ENCODE measurements at regions of chr1 and their contacts with region 1.

Region 1: DNA sequence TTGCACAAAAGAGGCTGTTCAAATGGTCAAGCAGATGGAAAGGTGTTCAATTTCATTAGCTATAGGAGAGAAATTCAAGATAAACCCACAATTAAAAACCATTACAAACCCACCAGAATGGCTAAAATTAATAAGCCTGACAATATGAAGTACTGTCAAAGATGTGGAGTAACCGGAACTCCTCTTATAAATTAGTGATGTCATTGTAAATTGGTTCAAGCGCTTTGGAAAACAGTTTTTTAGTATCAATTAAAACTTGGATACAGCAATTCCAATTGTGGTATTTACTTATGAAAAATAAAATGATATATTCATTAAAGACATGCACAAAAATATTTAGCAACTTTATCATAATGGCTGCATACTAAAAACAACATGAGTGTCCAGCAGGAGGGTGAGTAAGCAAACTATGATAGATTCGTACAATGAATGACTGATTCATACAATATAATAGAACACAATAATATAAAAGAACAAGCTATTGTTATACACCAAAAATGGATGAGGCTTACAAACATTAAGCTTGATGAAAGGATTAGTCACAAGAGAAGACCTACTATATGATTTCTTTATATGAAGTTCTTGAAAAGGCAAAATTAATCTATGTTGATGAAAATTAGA is 38.4 kb upstream of the FGGY start:
- DNase-seq: no peak
- H3K4me3 ChIP-seq: no peak overlapping the region
- H3K27ac ChIP-seq: no peak overlapping the region
- H3K4me1 ChIP-seq: no peaks in the 10 kb centered on the region
- H3K27me3 ChIP-seq: no peaks in the 10 kb centered on the region
- CTCF ChIP-seq: no peak
- POLR2A ChIP-seq: no peak

Region 2: DNA sequence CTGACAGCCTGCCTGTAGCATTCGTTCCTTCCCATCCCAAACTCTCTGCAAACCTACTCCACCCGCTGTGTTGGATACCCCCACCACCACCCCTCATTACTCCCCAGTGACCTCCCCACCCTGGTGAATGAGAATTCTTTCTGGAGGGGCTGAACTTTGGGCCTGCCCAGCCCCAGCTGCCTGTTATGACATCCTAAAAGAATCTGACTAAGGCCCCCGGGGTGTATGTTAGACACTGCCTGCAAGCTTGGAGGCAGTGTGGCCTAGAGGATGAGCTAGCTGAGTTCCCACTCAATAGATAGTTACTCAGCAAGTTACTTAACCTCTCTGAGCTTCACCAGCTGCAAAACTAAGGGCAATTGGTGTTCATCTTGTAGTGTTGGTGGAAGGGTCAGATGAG is 71.9 kb before region 1 on chr1:
- CTCF ChIA-PET with region 1: no interaction called
- POLR2A ChIA-PET with region 1: no interaction called
- dilution Hi-C with region 1: no loop called
- intact Hi-C with region 1: no loop called
- DNase-seq: no peak
- H3K4me3 ChIP-seq: no peak overlapping the region
- H3K27ac ChIP-seq: no peak overlapping the region
- H3K4me1 ChIP-seq: no peaks in the 10 kb centered on the region
- H3K27me3 ChIP-seq: no peaks in the 10 kb centered on the region
- CTCF ChIP-seq: no peak
- POLR2A ChIP-seq: no peak

Region 3: DNA sequence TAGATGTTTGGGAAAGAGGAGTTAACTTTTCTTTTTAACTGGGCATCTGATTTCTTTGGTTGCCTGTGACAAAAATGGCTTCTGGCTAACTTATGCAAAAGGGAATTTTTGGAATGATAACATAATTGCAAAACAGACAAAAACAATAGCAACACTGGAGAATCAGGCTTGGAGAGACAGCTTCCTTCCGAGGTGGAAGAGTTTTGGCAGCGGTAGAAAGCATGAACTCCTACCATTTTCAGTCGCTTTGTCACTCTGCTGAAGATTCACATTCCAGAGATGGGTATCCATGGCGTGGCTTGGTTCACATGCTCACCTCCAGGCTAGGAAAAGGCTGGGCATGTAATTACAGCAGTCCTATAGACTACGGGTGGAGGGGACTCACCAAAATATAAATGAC is 21.1 kb after region 1 on chr1:
- CTCF ChIA-PET with region 1: interaction called, 8 read pairs
- POLR2A ChIA-PET with region 1: no interaction called
- dilution Hi-C with region 1: no loop called
- intact Hi-C with region 1: loop called (anchors 2 kb)
- DNase-seq: no peak
- H3K4me3 ChIP-seq: no peak overlapping the region
- H3K27ac ChIP-seq: no peak overlapping the region
- H3K4me1 ChIP-seq: peaks cover 14% of the 10 kb centered on the region
- H3K27me3 ChIP-seq: no peaks in the 10 kb centered on the region
- CTCF ChIP-seq: no peak
- POLR2A ChIP-seq: no peak

Region 4: DNA sequence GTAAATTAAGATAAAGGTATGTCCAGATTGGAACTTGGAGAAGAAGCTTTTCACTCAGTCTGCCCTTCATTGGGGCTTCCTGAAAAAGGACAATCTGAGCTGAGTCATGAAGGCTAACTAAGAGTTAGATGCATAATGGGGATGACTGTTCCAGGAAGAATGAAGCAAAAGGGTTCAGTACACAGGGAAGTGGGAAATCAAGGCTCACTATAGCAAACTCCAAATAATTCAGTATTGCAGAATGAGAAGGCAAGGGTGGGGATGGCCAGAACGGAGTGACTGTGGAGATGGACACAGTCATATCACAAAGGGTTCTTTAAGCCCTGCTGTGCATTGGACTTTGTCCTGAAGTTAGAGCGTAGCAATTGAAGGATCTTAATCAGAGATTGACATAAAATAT is 196.7 kb after region 1 on chr1:
- CTCF ChIA-PET with region 1: no interaction called
- POLR2A ChIA-PET with region 1: no interaction called
- dilution Hi-C with region 1: no loop called
- intact Hi-C with region 1: no loop called
- DNase-seq: peak; percentile 28
- H3K4me3 ChIP-seq: no peak overlapping the region
- H3K27ac ChIP-seq: no peak overlapping the region
- H3K4me1 ChIP-seq: peaks cover 6% of the 10 kb centered on the region
- H3K27me3 ChIP-seq: no peaks in the 10 kb centered on the region
- CTCF ChIP-seq: no peak
- POLR2A ChIP-seq: no peak